ENCODE measurements at regions of chr14 and their contacts with region 1.

Region 1: GRCh38 chr14:90331497-90332435 is at the start of gene NRDE2:
- DNase-seq: peak; percentile 98 to 99
- ATAC-seq: peak; percentile 93 to 96
- H3K4me3 ChIP-seq: peak within 1 kb of the TSS; percentile 61 to 90 (median 80)
- H3K27ac ChIP-seq: peak within 1 kb of the TSS; percentile 79 to 93 (median 86)
- H3K4me1 ChIP-seq: peaks cover 9 to 12% of the 10 kb centered on the region in 2 donors
- H3K27me3 ChIP-seq: peaks cover 0 to 4% (median 0%) of the 10 kb centered on the region in 3 donors
- CTCF ChIP-seq: no peak
- POLR2A ChIP-seq: peak; percentile 35 to 58
- total RNA-seq, gene NRDE2: 7.5 to 11.8 (median 10.2) TPM

Region 2: DNA sequence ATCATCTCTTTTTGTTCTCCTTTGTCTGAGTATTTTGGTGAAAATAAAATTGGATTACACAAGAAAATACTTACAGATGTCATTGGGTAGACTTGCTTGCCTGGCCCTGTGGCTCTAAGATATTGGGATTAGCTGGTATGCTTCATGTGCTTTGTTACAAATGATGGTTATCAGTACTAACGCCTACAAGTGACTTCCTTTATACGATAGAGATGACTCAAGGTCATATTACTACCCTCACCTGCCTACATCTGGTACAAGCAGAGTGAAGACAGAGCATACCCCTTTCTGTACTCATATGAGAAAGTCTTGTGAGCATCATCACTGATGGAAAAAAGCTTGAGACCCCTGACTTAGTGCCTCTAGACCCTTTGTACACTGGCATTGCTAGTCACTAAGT is 327.9 kb before region 1 on chr14:
- in situ Hi-C with region 1: no loop called
- intact Hi-C with region 1: no loop called
- DNase-seq: no peak
- ATAC-seq: no peak
- H3K4me3 ChIP-seq: no peak overlapping the region
- H3K27ac ChIP-seq: no peak overlapping the region
- H3K4me1 ChIP-seq: no peaks in the 10 kb centered on the region
- H3K27me3 ChIP-seq: no peaks in the 10 kb centered on the region
- CTCF ChIP-seq: no peak
- POLR2A ChIP-seq: no peak

Region 3: DNA sequence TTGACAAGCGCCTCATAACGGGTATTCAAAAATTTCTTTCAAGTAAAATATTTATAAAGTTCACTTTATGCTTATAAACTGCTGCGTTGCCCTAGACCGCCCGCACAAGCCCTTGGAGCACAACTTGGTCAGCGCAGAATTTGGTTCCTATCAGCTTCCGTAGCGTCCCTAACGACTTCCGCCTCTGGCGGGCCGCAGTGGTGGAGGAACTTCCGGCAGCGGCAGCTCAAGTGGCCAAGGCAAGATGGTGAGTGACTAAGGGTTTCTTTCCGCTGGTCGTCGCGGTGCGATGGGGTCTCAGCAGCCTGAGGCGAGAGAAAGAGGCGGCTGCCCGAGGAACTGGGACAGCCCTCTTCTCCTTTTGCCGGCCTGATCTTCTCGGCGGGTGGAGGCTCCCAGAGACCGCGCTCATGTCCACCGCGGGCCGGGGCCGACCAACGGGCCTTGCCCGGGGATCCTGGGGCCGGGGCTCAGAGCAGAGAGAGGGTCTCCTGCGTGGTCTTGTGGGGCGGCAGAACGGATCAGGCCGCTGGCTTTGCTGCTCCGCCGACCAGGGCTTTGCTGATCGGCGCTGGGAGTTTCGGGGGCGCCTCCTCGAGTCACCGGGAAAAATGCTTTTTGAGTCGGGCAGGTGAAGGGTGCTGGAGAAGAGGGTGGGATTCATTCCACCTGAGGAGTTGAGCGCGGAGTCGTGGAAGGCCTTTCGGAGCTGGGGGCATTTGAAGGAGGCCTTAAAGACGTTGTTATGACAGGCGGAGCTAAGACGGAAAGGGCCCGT is 75.2 kb before region 1 on chr14 and contains the start of gene PSMC1:
- in situ Hi-C with region 1: no loop called
- intact Hi-C with region 1: loop called (anchors 1 kb)
- DNase-seq: peak; percentile 87 to 92
- ATAC-seq: peak; percentile 97 to 98
- H3K4me3 ChIP-seq: peak within 1 kb of the TSS; percentile 83 to 99 (median 89)
- H3K27ac ChIP-seq: peak within 1 kb of the TSS; percentile 89 to 98 (median 94)
- H3K4me1 ChIP-seq: peaks cover 20% of the 10 kb centered on the region in 2 donors
- H3K27me3 ChIP-seq: no peaks in the 10 kb centered on the region
- CTCF ChIP-seq: no peak
- POLR2A ChIP-seq: peak; percentile 58 to 80
- total RNA-seq, gene PSMC1: 374 to 642 (median 528) TPM

Region 4: DNA sequence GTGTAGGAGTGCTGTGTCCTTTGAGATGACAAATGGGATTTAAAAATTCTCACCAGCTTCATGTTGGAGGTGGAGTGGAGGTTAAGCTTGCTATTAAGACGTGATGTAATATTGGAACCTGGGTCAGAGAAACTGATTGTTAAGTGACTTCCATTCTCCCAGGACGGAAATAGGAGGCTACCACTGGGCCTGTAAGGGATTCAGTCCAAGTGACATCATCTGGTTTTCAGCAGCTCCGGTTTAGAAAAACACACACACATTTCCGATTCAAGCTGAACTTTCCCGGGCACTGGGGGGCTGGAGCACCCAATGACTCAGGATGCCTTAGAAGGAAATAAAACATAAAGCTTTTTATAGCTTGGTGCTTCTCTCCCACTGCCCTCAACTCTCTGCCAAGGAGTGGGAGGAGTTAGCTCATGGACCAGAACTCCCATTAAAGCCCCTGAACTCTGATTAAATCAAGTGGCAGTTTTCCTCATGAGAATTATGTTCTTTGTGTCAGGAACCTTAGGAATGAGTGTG is 77.5 kb after region 1 on chr14:
- in situ Hi-C with region 1: no loop called
- intact Hi-C with region 1: no loop called
- DNase-seq: no peak
- ATAC-seq: peak; percentile 47 to 60
- H3K4me3 ChIP-seq: no peak overlapping the region
- H3K27ac ChIP-seq: peak overlapping the region; percentile 63 to 94 (median 94)
- H3K4me1 ChIP-seq: peaks cover 21 to 23% of the 10 kb centered on the region in 2 donors
- H3K27me3 ChIP-seq: no peaks in the 10 kb centered on the region
- CTCF ChIP-seq: no peak
- POLR2A ChIP-seq: no peak

Region 5: GRCh38 chr14:90733139-90733808 is 401.5 kb after region 1 on chr14:
- in situ Hi-C with region 1: no loop called
- intact Hi-C with region 1: no loop called
- DNase-seq: peak; percentile 79 to 82
- ATAC-seq: peak; percentile 93 to 98
- H3K4me3 ChIP-seq: no peak overlapping the region
- H3K27ac ChIP-seq: peak overlapping the region; percentile 60 to 85 (median 74)
- H3K4me1 ChIP-seq: peaks cover 5 to 14% of the 10 kb centered on the region in 2 donors
- H3K27me3 ChIP-seq: no peaks in the 10 kb centered on the region
- CTCF ChIP-seq: no peak
- POLR2A ChIP-seq: no peak

Region 6: GRCh38 chr14:91510174-91511042 is 1178.6 kb after region 1 on chr14 and contains the start of gene PPP4R3A:
- in situ Hi-C with region 1: no loop called
- intact Hi-C with region 1: loop called (anchors 10 kb)
- DNase-seq: peak; percentile 90 to 92
- ATAC-seq: peak; percentile 88 to 92
- H3K4me3 ChIP-seq: peak within 1 kb of the TSS; percentile 86 to 96 (median 90)
- H3K27ac ChIP-seq: peak within 1 kb of the TSS; percentile 92 to 97 (median 96)
- H3K4me1 ChIP-seq: peaks cover 19 to 30% of the 10 kb centered on the region in 2 donors
- H3K27me3 ChIP-seq: peaks cover 0 to 3% (median 0%) of the 10 kb centered on the region in 3 donors
- CTCF ChIP-seq: no peak
- POLR2A ChIP-seq: peak; percentile 85 to 89
- total RNA-seq, gene PPP4R3A: 38.8 to 53.3 (median 44.6) TPM